Naive thymus-derived CD4-positive, alpha-beta T cell (primary cell): ENCODE measurements at regions of chr10 and their contacts with region 1.

Region 1: DNA sequence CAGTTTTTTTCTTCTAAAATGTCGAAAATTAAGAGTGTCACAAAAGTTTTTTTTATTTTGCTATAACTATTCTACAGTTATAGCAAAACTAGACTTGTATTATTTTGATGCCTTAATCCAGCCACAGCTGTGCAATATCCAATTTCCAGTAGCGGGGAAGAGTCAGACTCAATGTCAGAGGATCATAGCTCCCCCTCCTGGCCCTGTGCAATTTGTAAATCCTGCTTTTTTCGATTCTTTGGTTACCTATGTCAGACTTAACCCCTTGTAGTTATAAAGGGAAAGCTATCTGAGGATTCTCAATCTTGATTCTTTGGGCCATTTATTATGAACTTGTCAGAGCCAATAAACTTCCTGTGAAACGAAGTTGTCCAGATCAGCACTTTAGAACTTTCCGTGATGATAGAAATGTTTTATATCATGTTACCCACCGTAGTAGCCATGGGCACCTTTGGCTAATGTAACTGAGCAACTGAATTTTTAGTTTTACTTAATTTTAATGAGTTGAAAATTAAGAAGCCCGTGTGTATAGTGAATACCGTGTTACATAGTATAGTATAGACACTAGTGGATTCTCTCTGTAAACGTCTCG is 87.7 kb upstream of the PRKCQ start:
- DNase-seq: peak in 6 of 9 donors; percentile 17 to 45 (median 30)
- ATAC-seq: peak; percentile 59
- H3K4me3 ChIP-seq: no peak overlapping the region
- H3K4me3 Mint-ChIP-seq: no peak overlapping the region
- H3K27ac ChIP-seq: no peak overlapping the region
- H3K27ac Mint-ChIP-seq: no peak overlapping the region
- H3K4me1 ChIP-seq: peaks cover 0 to 10% of the 10 kb centered on the region in 2 donors
- H3K4me1 Mint-ChIP-seq: peaks cover 12 to 35% (median 24%) of the 10 kb centered on the region in 7 donors
- H3K27me3 ChIP-seq: no peaks in the 10 kb centered on the region
- H3K27me3 Mint-ChIP-seq: peaks cover 0 to 13% (median 0%) of the 10 kb centered on the region in 5 donors

Region 2: DNA sequence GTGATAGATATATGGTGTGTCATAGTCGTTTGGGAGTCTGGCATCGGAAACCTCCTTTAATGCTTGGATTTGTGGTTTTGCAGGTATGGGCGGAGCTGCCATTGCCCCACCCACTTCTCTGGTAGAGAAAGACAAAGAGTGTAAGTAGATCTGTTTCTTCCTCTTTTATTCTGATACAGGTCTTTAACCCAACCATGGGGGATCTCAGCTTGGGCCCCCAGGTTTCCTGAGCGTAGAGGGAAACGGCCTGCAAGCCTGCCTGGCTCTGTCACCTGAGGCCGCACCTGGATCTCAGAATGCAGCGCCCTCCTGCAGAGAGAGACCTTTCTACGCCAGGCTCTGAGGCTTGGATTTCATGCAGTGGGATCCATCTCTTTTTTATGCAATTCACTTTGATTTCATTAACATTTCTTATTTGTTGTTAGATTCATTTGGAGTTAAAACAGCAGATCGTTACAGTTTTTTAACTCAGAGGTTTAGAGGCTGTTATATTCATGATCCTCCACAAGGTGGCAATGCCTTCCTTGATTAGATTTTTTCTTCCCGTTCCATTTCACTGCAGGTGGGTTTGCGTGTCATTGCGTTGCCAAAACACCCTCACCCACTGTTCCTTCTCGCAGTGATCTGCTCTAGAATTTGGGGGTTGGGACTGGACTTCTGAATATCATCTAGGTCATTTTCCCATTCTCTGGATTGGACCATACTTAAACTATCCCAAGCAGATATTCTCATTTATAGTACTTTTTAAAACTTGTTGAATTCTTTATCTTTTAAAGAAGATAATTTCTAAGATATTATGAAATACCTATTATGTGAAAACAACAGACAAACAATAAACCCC is 559.0 kb before region 1 on chr10:
- CTCF ChIA-PET with region 1: no interaction called
- POLR2A ChIA-PET with region 1: no interaction called
- intact Hi-C with region 1: loop called in 1 of 2 experiments (anchors 5 kb)
- DNase-seq: peak in 7 of 9 donors; percentile 38 to 66 (median 62)
- ATAC-seq: peak; percentile 85
- H3K4me3 ChIP-seq: no peak overlapping the region
- H3K4me3 Mint-ChIP-seq: peak overlapping the region in 3 of 10 donors; percentile 2 to 37 (median 29)
- H3K27ac ChIP-seq: no peak overlapping the region
- H3K27ac Mint-ChIP-seq: peak overlapping the region; percentile 37 to 91 (median 80)
- H3K4me1 ChIP-seq: peaks cover 10 to 11% of the 10 kb centered on the region in 2 donors
- H3K4me1 Mint-ChIP-seq: peaks cover 11 to 38% (median 23%) of the 10 kb centered on the region in 7 donors
- H3K27me3 ChIP-seq: no peaks in the 10 kb centered on the region
- H3K27me3 Mint-ChIP-seq: no peaks in the 10 kb centered on the region

Region 3: GRCh38 chr10:6445501-6446316 is 222.1 kb before region 1 on chr10:
- CTCF ChIA-PET with region 1: interaction called, 4 read pairs
- POLR2A ChIA-PET with region 1: interaction called, 3 read pairs
- intact Hi-C with region 1: loop called (anchors 1 to 2 kb)
- DNase-seq: peak in 8 of 9 donors; percentile 28 to 49 (median 43)
- ATAC-seq: peak; percentile 64
- H3K4me3 ChIP-seq: no peak overlapping the region
- H3K4me3 Mint-ChIP-seq: peak overlapping the region in 5 of 10 donors; percentile 0 to 60 (median 30)
- H3K27ac ChIP-seq: peak overlapping the region; percentile 17
- H3K27ac Mint-ChIP-seq: peak overlapping the region; percentile 4 to 84 (median 66)
- H3K4me1 ChIP-seq: no peaks in the 10 kb centered on the region
- H3K4me1 Mint-ChIP-seq: peaks cover 10 to 49% (median 31%) of the 10 kb centered on the region in 7 donors
- H3K27me3 ChIP-seq: no peaks in the 10 kb centered on the region
- H3K27me3 Mint-ChIP-seq: no peaks in the 10 kb centered on the region

Region 4: GRCh38 chr10:6601246-6601805 is 66.4 kb before region 1 on chr10:
- CTCF ChIA-PET with region 1: interaction called, 4 read pairs
- POLR2A ChIA-PET with region 1: interaction called, 4 read pairs
- intact Hi-C with region 1: loop called in 1 of 2 experiments (anchors 1 kb)
- DNase-seq: peak in 6 of 9 donors; percentile 62 to 71 (median 65)
- ATAC-seq: peak; percentile 65
- H3K4me3 ChIP-seq: no peak overlapping the region
- H3K4me3 Mint-ChIP-seq: peak overlapping the region; percentile 52 to 86 (median 67)
- H3K27ac ChIP-seq: peak overlapping the region; percentile 63
- H3K27ac Mint-ChIP-seq: peak overlapping the region; percentile 60 to 100 (median 96)
- H3K4me1 ChIP-seq: peaks cover 17 to 56% of the 10 kb centered on the region in 2 donors
- H3K4me1 Mint-ChIP-seq: peaks cover 37 to 94% (median 86%) of the 10 kb centered on the region in 7 donors
- H3K27me3 ChIP-seq: no peaks in the 10 kb centered on the region
- H3K27me3 Mint-ChIP-seq: no peaks in the 10 kb centered on the region

Region 5: GRCh38 chr10:7161484-7162250 is 493.9 kb after region 1 on chr10:
- CTCF ChIA-PET with region 1: no interaction called
- POLR2A ChIA-PET with region 1: no interaction called
- intact Hi-C with region 1: no loop called
- DNase-seq: no peak
- ATAC-seq: no peak
- H3K4me3 ChIP-seq: no peak overlapping the region
- H3K4me3 Mint-ChIP-seq: peak overlapping the region in 1 of 10 donors; percentile 19
- H3K27ac ChIP-seq: no peak overlapping the region
- H3K27ac Mint-ChIP-seq: peak overlapping the region in 5 of 9 donors; percentile 37 to 75 (median 66)
- H3K4me1 ChIP-seq: peaks cover 12 to 17% of the 10 kb centered on the region in 2 donors
- H3K4me1 Mint-ChIP-seq: peaks cover 20 to 47% (median 42%) of the 10 kb centered on the region in 7 donors
- H3K27me3 ChIP-seq: no peaks in the 10 kb centered on the region
- H3K27me3 Mint-ChIP-seq: no peaks in the 10 kb centered on the region

Region 6: GRCh38 chr10:7417103-7417623 is 749.4 kb after region 1 on chr10:
- CTCF ChIA-PET with region 1: no interaction called
- POLR2A ChIA-PET with region 1: no interaction called
- intact Hi-C with region 1: loop called (anchors 1 to 2 kb)
- DNase-seq: peak in 7 of 9 donors; percentile 36 to 62 (median 46)
- ATAC-seq: peak; percentile 69
- H3K4me3 ChIP-seq: no peak overlapping the region
- H3K4me3 Mint-ChIP-seq: no peak overlapping the region
- H3K27ac ChIP-seq: no peak overlapping the region
- H3K27ac Mint-ChIP-seq: peak overlapping the region in 3 of 9 donors; percentile 27 to 79 (median 29)
- H3K4me1 ChIP-seq: peaks cover 5 to 10% of the 10 kb centered on the region in 2 donors
- H3K4me1 Mint-ChIP-seq: peaks cover 8 to 35% (median 25%) of the 10 kb centered on the region in 7 donors
- H3K27me3 ChIP-seq: no peaks in the 10 kb centered on the region
- H3K27me3 Mint-ChIP-seq: peaks cover 0 to 33% (median 0%) of the 10 kb centered on the region in 5 donors